H1 (cell line): ENCODE measurements at regions of chr19 and their contacts with region 1.

Region 1: GRCh38 chr19:16518483-16519229 is 22.5 kb downstream of the C19orf44 start:
- DNase-seq: no peak
- H3K4me3 ChIP-seq: no peak overlapping the region
- H3K27ac ChIP-seq: no peak overlapping the region
- H3K4me1 ChIP-seq: no peaks in the 10 kb centered on the region
- H3K27me3 ChIP-seq: no peaks in the 10 kb centered on the region
- CTCF ChIP-seq: peak; percentile 33 to 55 (median 45)
- EP300 ChIP-seq: no peak
- POLR2A ChIP-seq: no peak
- RAD21 ChIP-seq: peak; percentile 16 to 32; a peak in 3 of 4 replicates

Region 2: GRCh38 chr19:16404396-16405097 is 114.1 kb before region 1 on chr19:
- CTCF ChIA-PET with region 1: no interaction called
- POLR2A ChIA-PET with region 1: no interaction called
- DNase-seq: no peak
- H3K4me3 ChIP-seq: no peak overlapping the region
- H3K27ac ChIP-seq: no peak overlapping the region
- H3K4me1 ChIP-seq: no peaks in the 10 kb centered on the region
- H3K27me3 ChIP-seq: no peaks in the 10 kb centered on the region
- CTCF ChIP-seq: no peak
- EP300 ChIP-seq: no peak
- POLR2A ChIP-seq: no peak
- RAD21 ChIP-seq: no peak

Region 3: GRCh38 chr19:16417660-16418596 is 100.7 kb before region 1 on chr19:
- CTCF ChIA-PET with region 1: no interaction called
- POLR2A ChIA-PET with region 1: no interaction called
- DNase-seq: peak; percentile 72 to 90
- H3K4me3 ChIP-seq: no peak overlapping the region
- H3K27ac ChIP-seq: no peak overlapping the region
- H3K4me1 ChIP-seq: peaks cover 0 to 6% (median 0%) of the 10 kb centered on the region in 4 experiments; a peak in 2 of 7 replicates
- H3K27me3 ChIP-seq: no peaks in the 10 kb centered on the region; a peak in 1 of 7 replicates
- CTCF ChIP-seq: peak; percentile 87 to 97 (median 92)
- EP300 ChIP-seq: no peak
- POLR2A ChIP-seq: no peak
- RAD21 ChIP-seq: peak; percentile 66 to 75

Region 4: GRCh38 chr19:16536130-16536529 is 17.5 kb after region 1 on chr19:
- CTCF ChIA-PET with region 1: interaction called, 6 read pairs
- POLR2A ChIA-PET with region 1: interaction called, 34 read pairs
- DNase-seq: no peak
- H3K4me3 ChIP-seq: no peak overlapping the region
- H3K27ac ChIP-seq: no peak overlapping the region
- H3K4me1 ChIP-seq: peaks cover 0 to 4% (median 3%) of the 10 kb centered on the region in 4 experiments; a peak in 4 of 7 replicates
- H3K27me3 ChIP-seq: no peaks in the 10 kb centered on the region
- CTCF ChIP-seq: peak in 1 of 3 experiments; percentile 7; a peak in 1 of 4 replicates
- EP300 ChIP-seq: no peak
- POLR2A ChIP-seq: no peak
- RAD21 ChIP-seq: no peak

Region 5: DNA sequence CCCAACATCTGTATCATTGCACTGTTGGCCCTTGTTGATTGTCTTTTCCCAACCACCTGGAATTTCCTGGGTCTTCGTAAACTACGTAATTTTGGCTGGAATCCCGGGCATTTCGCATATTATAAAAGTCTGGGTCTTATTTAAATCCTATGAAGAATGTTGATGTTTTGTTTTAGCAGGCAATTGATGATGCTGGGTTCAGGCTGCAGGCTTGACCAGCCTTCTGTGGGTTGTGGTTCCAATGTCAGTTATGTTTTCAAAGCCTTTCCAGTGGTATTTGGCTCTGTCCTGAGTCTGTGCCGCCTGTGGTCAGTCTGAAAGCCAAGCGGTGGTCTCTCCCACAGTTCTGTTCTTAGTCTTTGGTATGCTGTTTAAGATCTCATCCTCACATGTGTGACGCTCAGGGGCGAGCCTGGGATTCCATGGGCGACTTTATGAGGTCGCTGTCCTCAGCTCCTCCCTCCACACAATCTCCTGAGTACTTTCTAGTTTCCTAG is 41.2 kb after region 1 on chr19:
- CTCF ChIA-PET with region 1: no interaction called
- POLR2A ChIA-PET with region 1: no interaction called
- DNase-seq: no peak
- H3K4me3 ChIP-seq: no peak overlapping the region
- H3K27ac ChIP-seq: no peak overlapping the region
- H3K4me1 ChIP-seq: no peaks in the 10 kb centered on the region
- H3K27me3 ChIP-seq: no peaks in the 10 kb centered on the region
- CTCF ChIP-seq: no peak
- EP300 ChIP-seq: no peak
- POLR2A ChIP-seq: no peak
- RAD21 ChIP-seq: no peak

Region 6: GRCh38 chr19:16584248-16585141 is 65.8 kb after region 1 on chr19:
- CTCF ChIA-PET with region 1: no interaction called
- POLR2A ChIA-PET with region 1: no interaction called
- DNase-seq: peak; percentile 27 to 73
- H3K4me3 ChIP-seq: peak overlapping the region in 2 of 4 experiments; percentile 17 to 45; a peak in 4 of 8 replicates
- H3K27ac ChIP-seq: no peak overlapping the region
- H3K4me1 ChIP-seq: peaks cover 4 to 39% (median 25%) of the 10 kb centered on the region in 4 experiments
- H3K27me3 ChIP-seq: no peaks in the 10 kb centered on the region
- CTCF ChIP-seq: no peak
- EP300 ChIP-seq: no peak
- POLR2A ChIP-seq: no peak
- RAD21 ChIP-seq: no peak